Motor neuron (in vitro differentiated cells): ENCODE measurements at regions of chr6 and their contacts with region 1.

Region 1: GRCh38 chr6:13336553-13336952 is 8.2 kb upstream of the TBC1D7 start:
- ATAC-seq: peak; percentile 60 to 99 (median 76)
- H3K4me3 ChIP-seq: peak overlapping the region in 1 of 5 donors; percentile 2
- H3K27ac ChIP-seq: no peak overlapping the region
- H3K4me1 ChIP-seq: no peaks in the 10 kb centered on the region

Region 2: DNA sequence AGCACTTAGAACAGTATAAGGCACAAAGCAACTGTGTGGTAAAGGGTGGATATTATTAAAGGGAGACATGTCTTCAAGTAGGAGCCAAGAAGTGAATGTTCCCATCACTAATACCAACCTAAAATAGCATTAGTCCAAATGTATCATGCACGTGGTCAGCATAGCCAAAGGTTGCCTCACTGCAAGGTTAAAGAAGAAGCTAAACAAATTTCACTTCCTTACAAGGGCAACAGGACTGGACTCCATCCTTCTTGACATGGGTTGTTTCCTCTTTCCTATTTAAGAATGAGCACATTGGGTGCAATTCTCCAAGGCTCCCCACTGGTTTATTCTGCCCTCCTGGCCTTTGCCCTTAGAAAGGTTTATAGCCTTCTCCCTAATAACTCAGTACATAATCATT is 433.3 kb before region 1 on chr6:
- in situ Hi-C with region 1: loop called in 6 of 9 experiments (anchors 10 to 25 kb)
- ATAC-seq: no peak
- H3K4me3 ChIP-seq: no peak overlapping the region
- H3K27ac ChIP-seq: no peak overlapping the region
- H3K4me1 ChIP-seq: no peaks in the 10 kb centered on the region

Region 3: DNA sequence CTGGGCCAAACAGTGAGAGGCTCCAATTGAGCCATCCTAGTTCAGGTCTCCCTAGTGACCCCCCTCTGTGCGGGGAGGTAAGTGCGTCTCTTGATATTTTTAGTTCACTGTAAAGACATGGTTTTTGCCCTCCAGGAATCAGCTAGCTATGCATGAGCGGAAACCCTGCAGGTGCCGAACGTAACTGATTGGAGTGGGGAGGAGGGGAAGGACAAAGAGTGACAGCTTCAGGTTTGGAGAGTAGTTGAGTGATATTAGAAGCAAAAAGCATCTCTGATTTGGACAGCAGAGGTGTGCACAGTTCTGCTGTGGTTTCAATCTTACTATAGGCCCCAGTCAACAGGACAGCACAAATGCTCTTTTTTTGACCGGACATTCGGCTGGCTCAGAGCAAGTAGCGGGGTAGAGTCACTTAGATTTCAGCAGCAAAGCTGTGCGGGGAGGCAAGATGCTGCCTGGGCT is 40.0 kb before region 1 on chr6:
- in situ Hi-C with region 1: no loop called
- ATAC-seq: no peak
- H3K4me3 ChIP-seq: no peak overlapping the region
- H3K27ac ChIP-seq: no peak overlapping the region
- H3K4me1 ChIP-seq: no peaks in the 10 kb centered on the region

Region 4: GRCh38 chr6:13574149-13574570 is 237.6 kb after region 1 on chr6:
- in situ Hi-C with region 1: loop called in 3 of 9 experiments (anchors 10 to 25 kb)
- ATAC-seq: peak; percentile 73 to 96 (median 90)
- H3K4me3 ChIP-seq: peak overlapping the region; percentile 56 to 78 (median 67)
- H3K27ac ChIP-seq: peak overlapping the region; percentile 64 to 81
- H3K4me1 ChIP-seq: peaks cover 5 to 6% of the 10 kb centered on the region in 2 donors

Region 5: DNA sequence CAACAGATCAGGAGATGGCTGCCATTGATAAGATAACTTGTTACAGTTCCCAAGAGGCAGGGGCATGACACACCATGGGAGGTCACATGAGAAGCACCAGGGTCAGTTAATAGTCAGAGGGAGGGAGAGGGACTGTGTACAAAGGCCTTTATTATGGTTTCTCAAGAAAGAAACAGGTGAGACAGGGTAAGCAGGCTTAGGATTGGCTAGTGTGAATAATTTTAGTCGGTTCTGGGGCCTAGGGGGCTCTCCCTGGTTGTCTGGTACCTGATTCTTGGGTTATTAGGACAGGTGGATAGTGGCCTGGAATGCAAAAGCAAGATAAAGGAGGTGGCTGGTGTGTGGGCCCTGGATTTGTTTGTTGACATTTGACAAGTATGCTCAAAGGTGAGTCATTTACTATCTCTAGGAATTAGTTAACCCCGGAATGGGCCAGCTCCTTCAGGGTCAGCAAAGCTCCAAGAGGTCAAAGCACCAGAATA is 527.2 kb after region 1 on chr6:
- in situ Hi-C with region 1: no loop called
- ATAC-seq: peak in 1 of 8 experiments; percentile 31
- H3K4me3 ChIP-seq: no peak overlapping the region
- H3K27ac ChIP-seq: no peak overlapping the region
- H3K4me1 ChIP-seq: no peaks in the 10 kb centered on the region